HepG2 (cell line): ENCODE measurements at regions of chr5 and their contacts with region 1.

Region 1: GRCh38 chr5:175853573-175854230 is 17.7 kb upstream of the CPLX2 start:
- DNase-seq: peak; percentile 89
- ATAC-seq: peak; percentile 73
- H3K4me3 ChIP-seq: no peak overlapping the region
- H3K27ac ChIP-seq: peak overlapping the region; percentile 98
- H3K4me1 ChIP-seq: peaks cover 90% of the 10 kb centered on the region
- H3K27me3 ChIP-seq: no peaks in the 10 kb centered on the region
- CTCF ChIP-seq: no peak
- EP300 ChIP-seq: peak in 1 of 2 experiments; percentile 80; a peak in 2 of 4 replicates
- POLR2A ChIP-seq: peak in 1 of 2 experiments; percentile 49; a peak in 1 of 4 replicates
- RAD21 ChIP-seq: peak; percentile 22; the same call in 1 of the 2 replicates

Region 2: DNA sequence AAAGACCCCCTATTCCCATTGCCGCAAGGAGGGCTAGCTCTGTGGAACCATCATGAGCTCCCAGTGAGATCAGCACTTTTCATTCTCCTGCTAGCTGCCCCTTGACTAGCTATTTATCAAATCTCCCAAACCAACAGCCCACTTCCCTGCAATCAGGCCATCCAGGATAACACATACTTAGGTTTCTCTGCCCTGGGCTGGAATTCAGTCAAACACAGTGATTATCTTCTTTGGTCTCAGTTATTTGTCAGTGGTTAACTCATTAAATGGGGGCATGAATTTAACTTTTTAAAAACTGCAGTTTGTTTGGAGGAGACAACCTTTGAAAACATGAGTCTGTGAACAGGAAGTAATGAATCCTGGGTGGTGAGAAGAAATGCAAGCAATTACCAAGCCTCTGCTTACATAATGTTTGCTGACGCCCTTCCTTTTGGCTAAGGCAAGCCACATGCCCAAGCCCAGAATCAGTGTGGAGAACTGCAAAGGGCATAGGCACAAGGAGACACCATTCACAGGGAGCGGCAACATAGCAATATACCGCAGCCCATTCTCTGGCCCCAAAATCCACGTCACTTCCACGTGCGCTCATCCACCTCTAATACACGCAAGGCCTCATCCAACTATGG is 684.7 kb before region 1 on chr5:
- CTCF ChIA-PET with region 1: no interaction called
- POLR2A ChIA-PET with region 1: no interaction called
- in situ Hi-C with region 1: no loop called
- intact Hi-C with region 1: no loop called
- DNase-seq: no peak
- ATAC-seq: no peak
- H3K4me3 ChIP-seq: no peak overlapping the region
- H3K27ac ChIP-seq: no peak overlapping the region
- H3K4me1 ChIP-seq: no peaks in the 10 kb centered on the region
- H3K27me3 ChIP-seq: no peaks in the 10 kb centered on the region
- CTCF ChIP-seq: no peak
- EP300 ChIP-seq: no peak
- POLR2A ChIP-seq: no peak
- RAD21 ChIP-seq: no peak

Region 3: DNA sequence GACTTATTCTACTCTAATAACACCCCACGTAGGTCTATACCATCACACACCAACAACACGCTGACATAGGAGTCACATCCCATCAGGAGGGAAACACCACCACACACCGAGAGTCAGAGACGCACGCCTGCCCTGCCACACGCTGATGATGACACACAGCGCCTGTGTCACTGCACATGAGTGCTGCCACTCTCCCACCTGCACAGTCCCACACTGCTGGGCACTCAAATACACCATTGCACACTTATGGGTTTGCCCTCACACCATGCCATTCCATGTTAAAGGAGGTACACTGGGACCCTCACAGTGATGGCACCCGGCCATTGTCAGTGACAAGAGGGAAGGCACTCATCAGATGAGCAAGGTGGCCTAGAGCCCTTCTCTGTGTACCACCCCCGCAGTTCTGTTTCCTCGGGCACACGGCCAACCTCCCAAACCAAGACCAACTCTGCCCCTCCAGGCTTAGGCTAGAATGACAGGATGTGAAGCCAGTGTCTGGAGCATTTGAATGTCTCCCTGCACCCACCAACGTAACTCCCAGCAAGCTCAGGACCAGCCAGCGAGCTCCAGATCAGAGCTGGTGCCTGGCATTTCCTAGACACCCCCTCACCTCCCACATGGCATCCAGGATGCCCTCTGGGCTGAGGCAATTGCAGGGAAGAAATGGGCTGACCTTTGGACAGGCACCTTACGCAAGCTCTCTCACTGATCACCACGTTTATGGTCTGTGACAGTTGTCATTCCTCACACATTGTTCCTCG is 14.1 kb after region 1 on chr5:
- CTCF ChIA-PET with region 1: no interaction called
- POLR2A ChIA-PET with region 1: interaction called, 16 read pairs
- in situ Hi-C with region 1: no loop called
- intact Hi-C with region 1: no loop called
- DNase-seq: peak; percentile 90
- ATAC-seq: peak; percentile 43
- H3K4me3 ChIP-seq: peak overlapping the region in 2 of 3 experiments; percentile 12 to 48; a peak in 3 of 6 replicates
- H3K27ac ChIP-seq: peak overlapping the region; percentile 70
- H3K4me1 ChIP-seq: peaks cover 86% of the 10 kb centered on the region
- H3K27me3 ChIP-seq: no peaks in the 10 kb centered on the region
- CTCF ChIP-seq: peak; percentile 70
- EP300 ChIP-seq: peak; percentile 34 to 85; a peak in 2 of 4 replicates
- POLR2A ChIP-seq: peak in 1 of 2 experiments; percentile 18; a peak in 1 of 4 replicates
- RAD21 ChIP-seq: peak; percentile 82